ENCODE measurements at regions of chr17 and their contacts with region 1.

Region 1: GRCh38 chr17:16329519-16330271 is 23.6 kb downstream of the CENPV start:
- DNase-seq: peak in 1 of 2 donors; percentile 22
- ATAC-seq: no peak
- H3K4me3 ChIP-seq: no peak overlapping the region
- H3K27ac ChIP-seq: no peak overlapping the region
- H3K4me1 ChIP-seq: no peaks in the 10 kb centered on the region
- H3K27me3 ChIP-seq: no peaks in the 10 kb centered on the region
- CTCF ChIP-seq: no peak

Region 2: GRCh38 chr17:16287563-16288027 is 42.1 kb before region 1 on chr17:
- intact Hi-C with region 1: loop called in 1 of 2 experiments (anchors 2 kb)
- DNase-seq: no peak
- ATAC-seq: no peak
- H3K4me3 ChIP-seq: no peak overlapping the region
- H3K27ac ChIP-seq: peak overlapping the region; percentile 83
- H3K4me1 ChIP-seq: peaks cover 20% of the 10 kb centered on the region
- H3K27me3 ChIP-seq: no peaks in the 10 kb centered on the region
- CTCF ChIP-seq: no peak

Region 3: GRCh38 chr17:16391451-16391850 is 61.8 kb after region 1 on chr17:
- intact Hi-C with region 1: no loop called
- DNase-seq: peak in 1 of 2 donors; percentile 32
- ATAC-seq: no peak
- H3K4me3 ChIP-seq: no peak overlapping the region
- H3K27ac ChIP-seq: no peak overlapping the region
- H3K4me1 ChIP-seq: peaks cover 5% of the 10 kb centered on the region
- H3K27me3 ChIP-seq: no peaks in the 10 kb centered on the region
- CTCF ChIP-seq: no peak

Region 4: DNA sequence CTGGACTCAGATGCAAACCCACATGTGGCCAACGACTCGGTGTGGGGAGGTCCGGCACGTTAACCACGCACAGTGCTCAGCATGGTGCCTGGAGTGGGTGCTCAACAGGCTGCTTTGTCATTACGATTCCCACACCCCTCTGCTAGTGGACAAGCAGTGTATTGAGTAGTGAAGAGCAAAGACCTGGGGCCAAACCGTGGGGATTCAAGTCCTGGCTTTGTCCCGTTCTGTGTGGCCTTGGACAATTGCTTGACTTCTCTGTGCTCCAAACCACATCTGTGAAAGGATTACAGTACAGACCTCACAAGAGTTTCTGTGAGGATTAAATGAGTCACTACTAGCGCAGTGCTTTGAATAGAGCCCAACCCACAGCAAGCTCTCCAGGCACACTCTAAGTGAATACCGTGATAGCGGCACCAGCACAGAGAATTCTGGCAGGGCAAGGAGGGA is 119.5 kb after region 1 on chr17:
- intact Hi-C with region 1: no loop called
- DNase-seq: no peak
- ATAC-seq: no peak
- H3K4me3 ChIP-seq: no peak overlapping the region
- H3K27ac ChIP-seq: no peak overlapping the region
- H3K4me1 ChIP-seq: no peaks in the 10 kb centered on the region
- H3K27me3 ChIP-seq: no peaks in the 10 kb centered on the region
- CTCF ChIP-seq: no peak

Measured in psoas muscle (tissue), 8 donors.